ENCODE measurements at regions of chr14 and their contacts with region 1.

Region 1: GRCh38 chr14:35404449-35405303 is at the start of gene NFKBIA:
- DNase-seq: peak; percentile 51 to 95
- H3K4me3 ChIP-seq: peak within 1 kb of the TSS; percentile 80 to 94
- H3K27ac ChIP-seq: peak within 1 kb of the TSS; percentile 99
- H3K4me1 ChIP-seq: peaks cover 18 to 31% of the 10 kb centered on the region in 2 donors
- H3K27me3 ChIP-seq: no peaks in the 10 kb centered on the region
- CTCF ChIP-seq: peak in 1 of 3 experiments; percentile 10
- total RNA-seq, gene NFKBIA: 944 TPM

Region 2: DNA sequence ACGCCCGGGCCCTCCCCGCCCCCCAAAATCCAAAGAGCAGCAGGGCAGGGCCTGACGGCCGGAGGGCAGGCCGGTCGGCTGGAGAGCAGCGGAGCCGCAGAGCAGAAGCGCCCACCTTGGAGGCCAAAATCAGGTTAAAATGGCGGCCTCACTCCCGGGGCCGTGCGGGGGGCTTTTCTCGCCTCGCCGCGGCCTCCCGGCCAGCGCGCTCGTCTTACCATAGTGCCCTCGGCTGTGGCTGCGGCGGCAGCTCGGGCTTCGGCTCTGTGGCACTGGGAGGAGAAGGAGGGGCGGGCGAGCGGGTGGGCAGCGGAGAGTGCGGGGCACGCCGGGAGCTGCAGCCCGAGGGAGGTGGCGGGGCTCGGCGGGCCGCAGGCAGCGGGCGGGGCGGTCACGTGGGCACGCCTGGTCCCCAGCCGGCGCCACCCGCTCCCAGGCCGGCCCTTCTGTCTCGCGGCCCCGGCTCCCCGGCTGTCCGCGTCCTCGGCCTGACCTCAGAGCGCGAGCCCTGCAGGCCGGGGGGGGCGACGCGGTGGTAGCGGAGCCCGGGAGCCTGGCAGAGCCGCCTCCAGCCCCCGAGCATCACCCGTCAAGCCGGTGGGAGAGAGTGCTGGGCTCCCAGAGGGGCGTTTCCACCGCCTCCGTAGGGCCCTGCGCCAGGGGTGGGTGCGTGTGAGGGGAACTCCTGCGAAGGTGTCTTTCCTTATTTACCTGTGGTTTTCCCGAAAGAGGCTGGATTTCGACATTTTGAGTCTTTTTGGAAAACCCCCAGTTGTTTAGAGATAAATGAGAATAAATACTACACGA is 690.2 kb before region 1 on chr14 and contains the start of gene CFL2:
- intact Hi-C with region 1: loop called (anchors 10 kb)
- DNase-seq: peak; percentile 55 to 91
- H3K4me3 ChIP-seq: peak within 1 kb of the TSS; percentile 75 to 85
- H3K27ac ChIP-seq: peak within 1 kb of the TSS; percentile 88 to 99
- H3K4me1 ChIP-seq: peaks cover 0 to 23% of the 10 kb centered on the region in 2 donors
- H3K27me3 ChIP-seq: no peaks in the 10 kb centered on the region
- CTCF ChIP-seq: no peak
- total RNA-seq, gene CFL2: 49.0 TPM

Region 3: GRCh38 chr14:35121887-35122695 is 282.6 kb before region 1 on chr14 and contains the starts of genes PPP2R3C and PRORP:
- intact Hi-C with region 1: loop called (anchors 2 kb)
- DNase-seq: peak; percentile 74 to 94
- H3K4me3 ChIP-seq: peak within 1 kb of the TSS; percentile 83 to 92
- H3K27ac ChIP-seq: peak within 1 kb of the TSS; percentile 91 to 98
- H3K4me1 ChIP-seq: peaks cover 3 to 18% of the 10 kb centered on the region in 2 donors
- H3K27me3 ChIP-seq: no peaks in the 10 kb centered on the region
- CTCF ChIP-seq: no peak
- total RNA-seq, gene PPP2R3C: 63.6 TPM
- total RNA-seq, gene PRORP: 42.5 TPM

Region 4: DNA sequence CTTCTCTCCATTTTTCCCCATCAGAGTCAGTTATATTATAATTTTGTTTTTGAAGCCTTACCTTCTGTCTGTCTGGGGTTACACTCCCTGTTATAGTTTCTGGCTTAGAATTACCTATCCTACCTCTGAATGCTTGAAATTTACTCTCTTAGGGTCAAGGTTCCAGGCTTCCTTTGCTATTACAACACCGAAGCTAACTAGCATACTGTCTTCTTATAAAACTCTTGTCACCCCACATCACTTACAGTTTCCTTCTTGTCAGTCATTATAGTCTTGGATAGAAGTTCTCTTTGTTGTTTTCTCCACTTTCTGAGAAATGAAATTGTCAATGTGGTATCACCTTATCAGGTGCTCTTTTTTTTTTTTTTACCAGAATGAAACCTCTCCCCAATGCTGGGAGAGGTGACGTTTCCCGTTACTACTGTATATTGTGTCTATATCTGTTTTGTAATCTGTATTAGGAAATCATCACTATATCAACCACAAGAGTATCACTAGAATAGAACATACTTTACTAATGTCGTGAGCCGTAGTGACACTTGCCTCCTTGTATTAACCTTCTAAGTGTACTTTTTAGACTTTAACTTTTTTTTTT is 181.7 kb before region 1 on chr14:
- intact Hi-C with region 1: no loop called
- DNase-seq: no peak
- H3K4me3 ChIP-seq: no peak overlapping the region
- H3K27ac ChIP-seq: no peak overlapping the region
- H3K4me1 ChIP-seq: no peaks in the 10 kb centered on the region
- H3K27me3 ChIP-seq: no peaks in the 10 kb centered on the region
- CTCF ChIP-seq: no peak

Region 5: DNA sequence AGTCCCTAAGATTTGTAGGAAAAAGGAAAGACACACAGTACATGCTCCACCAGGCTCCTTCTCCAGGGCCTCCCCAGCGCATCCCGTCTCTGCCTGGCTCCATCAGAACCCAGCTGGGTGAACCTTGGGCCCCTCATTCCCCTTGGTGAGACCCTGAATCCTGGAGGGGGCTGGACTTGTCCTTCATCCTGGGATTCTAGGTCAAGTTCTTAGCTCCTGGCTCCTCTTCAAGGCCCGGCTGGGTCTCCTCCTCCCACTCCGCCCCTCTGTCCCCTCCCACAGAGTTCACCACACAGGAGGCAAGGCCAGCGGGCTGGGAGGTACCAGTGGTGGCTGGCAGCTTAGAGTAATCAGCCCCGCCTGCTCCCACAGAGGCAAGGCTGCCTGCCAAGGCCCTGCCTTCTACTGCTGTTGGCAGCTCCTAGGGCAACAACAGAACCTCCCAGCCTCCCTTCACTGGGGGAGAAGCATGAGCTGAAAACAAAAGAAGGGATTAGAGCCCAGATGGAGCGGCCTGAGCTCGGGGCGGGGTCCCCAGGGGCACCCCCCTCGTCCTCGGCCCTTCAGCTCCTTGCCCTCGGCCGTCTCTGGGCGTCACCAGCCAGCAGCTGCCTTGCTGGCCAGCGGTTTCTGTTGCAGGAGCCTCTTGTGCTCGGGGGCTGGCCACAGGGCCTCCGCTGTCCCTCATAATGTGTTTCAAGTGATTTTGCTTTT is 63.1 kb before region 1 on chr14:
- intact Hi-C with region 1: loop called (anchors 1 kb)
- DNase-seq: peak; percentile 97 to 99
- H3K4me3 ChIP-seq: peak overlapping the region; percentile 48 to 58
- H3K27ac ChIP-seq: peak overlapping the region; percentile 95 to 97
- H3K4me1 ChIP-seq: peaks cover 11 to 33% of the 10 kb centered on the region in 2 donors
- H3K27me3 ChIP-seq: no peaks in the 10 kb centered on the region
- CTCF ChIP-seq: no peak

Region 6: DNA sequence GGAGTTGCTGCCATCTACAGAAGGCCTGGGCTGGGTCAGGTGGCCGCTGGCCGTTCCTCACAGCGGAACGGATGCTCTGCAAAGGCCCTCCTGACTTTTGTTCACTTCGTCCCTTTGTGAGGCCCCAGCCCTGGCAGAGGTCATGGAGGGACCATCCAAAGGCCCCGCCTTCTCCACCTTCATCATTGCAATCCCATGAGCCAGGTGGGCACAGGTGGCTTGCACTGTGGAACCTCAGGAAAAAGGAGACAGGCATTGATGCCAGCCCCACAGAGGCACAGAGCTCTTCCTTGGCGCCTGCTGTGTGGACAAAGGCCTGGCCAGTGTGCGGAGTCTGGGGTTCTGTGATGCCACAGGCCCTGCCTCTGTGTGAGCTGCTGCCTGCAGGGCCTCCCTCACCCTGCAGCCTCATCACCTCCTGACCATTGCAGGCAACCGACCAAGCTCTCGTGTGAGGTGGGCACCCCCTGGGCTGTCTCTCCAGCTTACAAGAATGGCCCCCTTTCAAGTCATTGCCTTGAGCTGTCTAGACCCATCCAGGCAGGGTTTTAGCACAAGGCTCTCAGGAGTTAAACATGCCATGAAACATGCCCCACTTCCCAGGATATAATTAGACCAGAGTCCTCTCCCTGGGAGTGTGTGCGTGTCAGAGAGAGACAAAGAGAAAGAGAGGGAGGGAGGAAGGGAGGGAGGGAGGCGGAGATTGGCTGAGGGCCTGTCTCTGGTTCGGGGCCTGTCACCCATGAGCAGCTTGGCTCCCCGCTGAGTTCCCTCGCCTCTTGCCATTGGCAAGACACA is 19.4 kb before region 1 on chr14:
- intact Hi-C with region 1: loop called (anchors 2 kb)
- DNase-seq: peak; percentile 45 to 90
- H3K4me3 ChIP-seq: peak overlapping the region in 1 of 2 donors; percentile 8
- H3K27ac ChIP-seq: peak overlapping the region; percentile 87 to 93
- H3K4me1 ChIP-seq: peaks cover 19 to 25% of the 10 kb centered on the region in 2 donors
- H3K27me3 ChIP-seq: no peaks in the 10 kb centered on the region
- CTCF ChIP-seq: no peak

Region 7: GRCh38 chr14:35712466-35712865 is 307.8 kb after region 1 on chr14:
- intact Hi-C with region 1: no loop called
- DNase-seq: no peak
- H3K4me3 ChIP-seq: no peak overlapping the region
- H3K27ac ChIP-seq: no peak overlapping the region
- H3K4me1 ChIP-seq: no peaks in the 10 kb centered on the region
- H3K27me3 ChIP-seq: no peaks in the 10 kb centered on the region
- CTCF ChIP-seq: no peak

Measured in ascending aorta (tissue), 2 donors.